Left colon (tissue), 2 donors: ENCODE measurements at regions of chr11 and their contacts with region 1.

Region 1: GRCh38 chr11:56545531-56545930 is 2.5 kb upstream of the OR5M11 start:
- DNase-seq: no peak
- ATAC-seq: peak; percentile 95

Region 2: DNA sequence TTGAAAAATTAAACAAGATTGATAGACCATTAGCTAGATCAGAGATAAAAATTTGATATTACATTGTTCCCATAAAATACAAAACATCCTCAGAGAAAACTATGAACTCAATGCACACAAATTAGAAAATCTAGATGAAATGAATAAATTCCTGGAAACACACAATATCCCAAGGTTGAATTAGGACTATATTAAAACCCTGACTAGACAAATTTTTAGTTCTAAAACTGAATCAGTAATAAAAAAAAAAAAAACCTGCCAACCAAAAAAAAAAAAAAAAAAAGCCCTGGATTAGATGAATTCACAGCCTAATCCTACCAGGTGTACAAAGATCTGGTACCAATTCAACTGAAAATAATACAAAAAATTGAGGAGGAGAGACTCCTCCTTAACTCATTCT is 205.2 kb before region 1 on chr11:
- intact Hi-C with region 1: no loop called
- DNase-seq: no peak
- ATAC-seq: no peak

Region 3: GRCh38 chr11:56522008-56522407 is 23.5 kb before region 1 on chr11:
- intact Hi-C with region 1: loop called in 1 of 2 experiments (anchors 2 kb)
- DNase-seq: peak; percentile 28 to 37
- ATAC-seq: peak; percentile 100